ENCODE measurements at regions of chr1 and their contacts with region 1.

Region 1: GRCh38 chr1:84996846-84997666 is at the start of gene MCOLN2:
- DNase-seq: peak; percentile 68
- H3K4me3 Mint-ChIP-seq: peak within 1 kb of the TSS; percentile 77
- H3K27ac Mint-ChIP-seq: peak within 1 kb of the TSS; percentile 95
- H3K4me1 Mint-ChIP-seq: peaks cover 40% of the 10 kb centered on the region
- H3K27me3 Mint-ChIP-seq: peaks cover 12% of the 10 kb centered on the region
- total RNA-seq, gene MCOLN2: 42.1 to 43.2 TPM

Region 2: GRCh38 chr1:84698151-84699110 is 298.6 kb before region 1 on chr1:
- CTCF ChIA-PET with region 1: no interaction called
- POLR2A ChIA-PET with region 1: no interaction called
- intact Hi-C with region 1: no loop called
- DNase-seq: no peak
- H3K4me3 Mint-ChIP-seq: no peak overlapping the region
- H3K27ac Mint-ChIP-seq: no peak overlapping the region
- H3K4me1 Mint-ChIP-seq: peaks cover 8% of the 10 kb centered on the region
- H3K27me3 Mint-ChIP-seq: peaks cover 6% of the 10 kb centered on the region

Region 3: GRCh38 chr1:84959294-84959693 is 37.8 kb before region 1 on chr1:
- CTCF ChIA-PET with region 1: interaction called, 24 read pairs
- POLR2A ChIA-PET with region 1: interaction called, 41 read pairs
- intact Hi-C with region 1: loop called (anchors 1 kb)
- DNase-seq: peak; percentile 81
- H3K4me3 Mint-ChIP-seq: no peak overlapping the region
- H3K27ac Mint-ChIP-seq: peak overlapping the region; percentile 72
- H3K4me1 Mint-ChIP-seq: peaks cover 32% of the 10 kb centered on the region
- H3K27me3 Mint-ChIP-seq: no peaks in the 10 kb centered on the region

Region 4: DNA sequence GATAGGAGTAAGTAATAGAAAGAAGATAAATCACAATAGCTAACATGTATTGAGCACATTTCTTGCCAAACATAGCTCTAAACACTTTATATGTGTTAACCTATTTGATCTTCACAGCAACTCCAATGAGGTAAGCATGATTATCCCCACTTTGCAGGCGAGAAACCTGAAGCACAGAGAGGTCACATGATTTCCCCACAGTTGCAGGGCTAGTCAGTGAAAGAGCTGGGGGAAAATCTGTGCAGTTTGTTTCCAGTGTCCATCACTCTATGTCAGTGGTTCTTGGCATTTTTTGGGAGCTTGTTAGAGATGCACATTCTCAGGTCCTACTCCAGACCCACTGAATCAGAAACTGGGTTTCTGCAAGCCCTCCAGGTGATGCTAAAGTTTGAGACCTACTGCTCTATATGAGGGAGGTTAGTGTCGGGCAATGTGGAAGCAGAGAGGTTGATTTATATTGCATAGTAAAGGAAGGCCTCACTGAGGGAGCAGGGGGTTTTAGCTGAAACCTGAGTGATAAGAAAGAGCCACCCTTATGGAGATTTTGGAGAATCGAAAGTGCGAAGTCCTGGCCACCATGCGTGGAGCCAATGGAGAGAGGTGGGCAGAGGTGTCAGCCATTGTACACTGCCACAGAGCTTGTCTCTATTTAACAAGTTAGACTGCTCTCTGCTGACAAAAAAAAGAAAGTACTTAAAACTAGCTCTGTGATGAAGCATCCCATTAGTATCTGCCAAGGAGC is 30.4 kb after region 1 on chr1:
- CTCF ChIA-PET with region 1: interaction called, 7 read pairs
- POLR2A ChIA-PET with region 1: no interaction called
- intact Hi-C with region 1: loop called (anchors 2 kb)
- DNase-seq: peak; percentile 25
- H3K4me3 Mint-ChIP-seq: no peak overlapping the region
- H3K27ac Mint-ChIP-seq: no peak overlapping the region
- H3K4me1 Mint-ChIP-seq: peaks cover 12% of the 10 kb centered on the region
- H3K27me3 Mint-ChIP-seq: no peaks in the 10 kb centered on the region

Region 5: GRCh38 chr1:85061711-85062424 is 64.8 kb after region 1 on chr1:
- CTCF ChIA-PET with region 1: no interaction called
- POLR2A ChIA-PET with region 1: no interaction called
- intact Hi-C with region 1: loop called (anchors 1 kb)
- DNase-seq: peak; percentile 89
- H3K4me3 Mint-ChIP-seq: peak overlapping the region; percentile 77
- H3K27ac Mint-ChIP-seq: peak overlapping the region; percentile 31
- H3K4me1 Mint-ChIP-seq: peaks cover 12% of the 10 kb centered on the region
- H3K27me3 Mint-ChIP-seq: peaks cover 13% of the 10 kb centered on the region

Region 6: GRCh38 chr1:85297855-85298629 is 301.0 kb after region 1 on chr1:
- CTCF ChIA-PET with region 1: no interaction called
- POLR2A ChIA-PET with region 1: no interaction called
- intact Hi-C with region 1: loop called (anchors 5 kb)
- DNase-seq: peak; percentile 91
- H3K4me3 Mint-ChIP-seq: peak overlapping the region; percentile 42
- H3K27ac Mint-ChIP-seq: peak overlapping the region; percentile 71
- H3K4me1 Mint-ChIP-seq: peaks cover 27% of the 10 kb centered on the region
- H3K27me3 Mint-ChIP-seq: peaks cover 38% of the 10 kb centered on the region

Measured in activated CD4-positive, alpha-beta memory T cell treated with anti-CD3 and anti-CD28 coated beads for 36 hours (primary cell).